SK-N-SH (cell line): ENCODE measurements at regions of chr5 and their contacts with region 1.

Region 1: GRCh38 chr5:159106569-159107282 is 7.0 kb upstream of the EBF1 start:
- DNase-seq: peak; percentile 91
- H3K4me3 ChIP-seq: peak overlapping the region; percentile 28 to 63; a peak in 2 of 4 replicates
- H3K27ac ChIP-seq: no peak overlapping the region
- H3K4me1 ChIP-seq: no peaks in the 10 kb centered on the region; a peak in 1 of 4 replicates
- H3K27me3 ChIP-seq: peaks cover 10% of the 10 kb centered on the region; the same call in 1 of the 2 replicates
- CTCF ChIP-seq: peak; percentile 97
- EP300 ChIP-seq: no peak
- RAD21 ChIP-seq: peak; percentile 96

Region 2: DNA sequence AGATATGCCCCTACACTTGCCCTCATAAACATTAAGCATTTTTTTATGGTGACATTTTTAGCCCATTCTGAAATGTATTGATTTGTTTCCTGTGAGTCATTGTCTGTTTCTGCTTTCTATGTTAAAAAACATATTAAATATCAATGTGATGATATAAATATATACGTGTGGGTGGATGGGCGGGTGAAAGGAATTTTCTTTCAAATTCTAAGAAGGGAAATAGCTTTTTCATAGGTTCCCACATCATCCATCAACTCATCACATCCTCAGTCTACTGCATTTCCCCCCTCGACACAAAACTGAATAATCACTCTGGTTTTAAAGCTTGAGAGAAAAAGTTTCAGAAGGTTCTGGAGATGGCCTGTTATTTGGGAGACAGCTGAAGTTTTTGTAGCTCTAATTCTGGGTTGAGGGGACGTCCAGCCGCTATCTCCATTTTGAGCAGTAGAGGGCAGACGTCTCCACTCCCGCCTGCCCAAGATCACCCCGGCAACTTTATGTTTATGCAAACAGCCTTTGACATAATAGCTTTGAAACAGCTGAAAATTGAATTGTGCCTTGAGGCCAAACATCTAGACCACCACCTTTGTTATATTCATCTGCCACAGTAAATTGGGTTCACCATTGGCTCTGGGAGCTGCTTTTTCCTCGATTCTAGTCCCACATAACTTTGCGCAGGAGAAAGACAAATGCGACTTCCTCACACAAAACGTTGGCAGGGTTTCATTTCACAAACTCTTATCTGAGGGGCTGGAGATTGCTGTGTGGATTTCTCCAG is 1031.5 kb before region 1 on chr5:
- CTCF ChIA-PET with region 1: interaction called, 32 read pairs
- POLR2A ChIA-PET with region 1: no interaction called
- DNase-seq: peak; percentile 61
- H3K4me3 ChIP-seq: no peak overlapping the region; a peak in 1 of 4 replicates
- H3K27ac ChIP-seq: peak overlapping the region in 1 of 2 experiments; percentile 55; a peak in 1 of 4 replicates
- H3K4me1 ChIP-seq: peaks cover 0 to 3% of the 10 kb centered on the region in 2 experiments; a peak in 2 of 4 replicates
- H3K27me3 ChIP-seq: peaks cover 2% of the 10 kb centered on the region; the same call in 1 of the 2 replicates
- CTCF ChIP-seq: peak; percentile 89
- EP300 ChIP-seq: peak in 1 of 2 experiments; percentile 43; a peak in 1 of 4 replicates
- RAD21 ChIP-seq: peak; percentile 83

Region 3: GRCh38 chr5:158174918-158175851 is 931.5 kb before region 1 on chr5:
- CTCF ChIA-PET with region 1: interaction called, 67 read pairs
- POLR2A ChIA-PET with region 1: no interaction called
- DNase-seq: peak; percentile 76
- H3K4me3 ChIP-seq: peak overlapping the region in 1 of 2 experiments; percentile 43; a peak in 1 of 4 replicates
- H3K27ac ChIP-seq: no peak overlapping the region
- H3K4me1 ChIP-seq: peaks cover 0 to 2% of the 10 kb centered on the region in 2 experiments; a peak in 1 of 4 replicates
- H3K27me3 ChIP-seq: no peaks in the 10 kb centered on the region
- CTCF ChIP-seq: peak; percentile 87
- EP300 ChIP-seq: no peak
- RAD21 ChIP-seq: peak; percentile 96

Region 4: GRCh38 chr5:158739951-158740757 is 366.6 kb before region 1 on chr5:
- CTCF ChIA-PET with region 1: interaction called, 15 read pairs
- POLR2A ChIA-PET with region 1: no interaction called
- DNase-seq: no peak
- H3K4me3 ChIP-seq: no peak overlapping the region
- H3K27ac ChIP-seq: no peak overlapping the region; a peak in 1 of 4 replicates
- H3K4me1 ChIP-seq: peaks cover 0 to 3% of the 10 kb centered on the region in 2 experiments; a peak in 1 of 4 replicates
- H3K27me3 ChIP-seq: no peaks in the 10 kb centered on the region
- CTCF ChIP-seq: peak; percentile 18; the same call in 1 of the 2 replicates
- EP300 ChIP-seq: no peak
- RAD21 ChIP-seq: peak; percentile 46; the same call in 1 of the 2 replicates

Region 5: GRCh38 chr5:159120446-159120845 is 13.7 kb after region 1 on chr5:
- CTCF ChIA-PET with region 1: interaction called, 12 read pairs
- POLR2A ChIA-PET with region 1: no interaction called
- DNase-seq: no peak
- H3K4me3 ChIP-seq: peak overlapping the region in 1 of 2 experiments; percentile 44; a peak in 2 of 4 replicates
- H3K27ac ChIP-seq: no peak overlapping the region
- H3K4me1 ChIP-seq: no peaks in the 10 kb centered on the region
- H3K27me3 ChIP-seq: no peaks in the 10 kb centered on the region
- CTCF ChIP-seq: no peak
- EP300 ChIP-seq: no peak
- RAD21 ChIP-seq: no peak

Region 6: GRCh38 chr5:159386028-159386711 is 279.4 kb after region 1 on chr5:
- CTCF ChIA-PET with region 1: no interaction called
- POLR2A ChIA-PET with region 1: no interaction called
- DNase-seq: no peak
- H3K4me3 ChIP-seq: no peak overlapping the region
- H3K27ac ChIP-seq: no peak overlapping the region
- H3K4me1 ChIP-seq: no peaks in the 10 kb centered on the region
- H3K27me3 ChIP-seq: no peaks in the 10 kb centered on the region
- CTCF ChIP-seq: no peak
- EP300 ChIP-seq: no peak
- RAD21 ChIP-seq: no peak